ENCODE measurements at regions of chr17 and their contacts with region 1.

Region 1: DNA sequence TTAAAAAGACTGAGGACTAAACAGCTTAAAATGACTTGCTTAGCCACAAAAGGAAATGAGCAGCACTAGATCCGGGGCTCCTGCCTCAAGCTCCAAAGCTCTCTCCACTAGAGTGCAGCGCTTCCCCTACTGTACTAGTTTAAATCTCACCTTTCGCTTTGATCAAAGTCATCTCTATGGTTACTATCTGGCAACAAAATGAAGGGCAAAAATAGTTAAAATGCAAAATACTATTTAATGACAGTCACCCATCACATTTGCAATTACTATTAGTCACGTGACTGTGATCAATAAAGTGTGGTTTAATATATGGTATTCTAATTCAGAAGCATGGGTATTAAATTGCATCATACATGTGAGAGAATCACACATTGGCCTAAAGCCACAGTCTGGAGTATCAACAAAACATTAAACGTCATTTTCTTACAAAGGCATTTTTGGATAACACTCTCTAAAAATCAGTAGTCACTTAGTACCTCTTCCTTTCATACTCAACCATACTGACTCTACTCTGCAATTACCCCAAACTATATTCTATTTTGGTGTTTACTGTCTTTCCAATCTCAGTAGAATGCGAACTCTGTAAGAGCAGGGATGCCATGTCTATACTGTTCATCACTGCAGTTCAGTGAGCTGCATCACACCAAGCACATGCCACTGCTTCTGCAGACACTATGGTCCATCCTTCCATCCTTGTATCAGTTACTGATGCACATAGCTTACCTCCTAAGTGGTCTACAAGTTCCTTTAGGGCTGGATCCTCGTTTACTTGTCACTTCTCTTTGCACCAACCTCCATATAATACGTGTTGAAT is 6.2 kb downstream of the PSMD12 start:
- DNase-seq: no peak

Region 2: GRCh38 chr17:66123163-66123562 is 1237.0 kb before region 1 on chr17:
- intact Hi-C with region 1: loop called in 1 of 2 experiments (anchors 5 kb)
- DNase-seq: no peak

Measured in posterior vena cava (tissue), 2 donors.